Calu3 (cell line): ENCODE measurements at regions of chr6 and their contacts with region 1.

Region 1: DNA sequence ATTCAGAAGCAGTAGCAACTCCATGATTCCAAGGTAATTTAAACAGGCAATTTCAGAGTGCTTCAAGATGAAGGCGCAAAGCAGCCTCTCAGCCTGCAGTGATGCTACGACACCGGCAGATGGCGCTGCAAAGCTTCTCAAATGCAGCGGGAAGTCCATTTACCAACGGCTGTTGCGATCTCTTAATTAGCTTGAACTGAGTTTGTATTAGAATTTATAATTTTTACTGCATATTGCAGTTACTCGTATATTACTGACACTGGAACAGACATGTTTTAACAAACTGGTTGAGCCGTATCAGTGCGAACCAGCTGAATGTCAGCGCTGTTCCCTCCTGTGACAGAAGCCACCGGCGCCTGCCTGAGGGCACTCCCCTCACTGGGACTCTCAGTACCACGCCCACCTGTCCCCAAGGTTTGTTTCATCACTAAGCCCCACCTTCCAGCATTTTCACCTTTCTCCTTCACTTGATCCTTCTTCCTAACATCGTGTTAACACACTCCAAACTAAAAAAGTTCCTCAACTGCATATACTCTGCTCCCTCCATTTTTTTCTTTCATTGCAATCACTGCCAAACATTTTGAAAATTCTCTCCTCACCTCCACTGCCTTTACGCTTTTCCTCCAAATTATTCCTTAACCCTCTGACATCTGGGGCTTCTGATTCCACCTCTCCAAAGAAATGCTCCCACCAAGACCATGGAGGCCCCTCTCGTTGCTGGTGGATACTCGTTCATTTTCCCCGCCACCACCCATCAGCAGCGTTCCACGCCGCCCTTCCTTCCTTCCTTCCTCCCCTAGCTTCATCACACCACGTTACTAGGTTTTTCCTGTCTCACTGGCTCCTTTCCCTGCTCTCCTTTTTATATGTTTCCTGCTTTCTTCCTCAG is 14.5 kb downstream of the GNL1 start:
- DNase-seq: peak; percentile 80
- H3K4me3 Mint-ChIP-seq: peak overlapping the region; percentile 27
- H3K27ac Mint-ChIP-seq: peak overlapping the region; percentile 6
- H3K4me1 Mint-ChIP-seq: peaks cover 18% of the 10 kb centered on the region
- H3K27me3 Mint-ChIP-seq: no peaks in the 10 kb centered on the region
- CTCF ChIP-seq: peak; percentile 96

Region 2: DNA sequence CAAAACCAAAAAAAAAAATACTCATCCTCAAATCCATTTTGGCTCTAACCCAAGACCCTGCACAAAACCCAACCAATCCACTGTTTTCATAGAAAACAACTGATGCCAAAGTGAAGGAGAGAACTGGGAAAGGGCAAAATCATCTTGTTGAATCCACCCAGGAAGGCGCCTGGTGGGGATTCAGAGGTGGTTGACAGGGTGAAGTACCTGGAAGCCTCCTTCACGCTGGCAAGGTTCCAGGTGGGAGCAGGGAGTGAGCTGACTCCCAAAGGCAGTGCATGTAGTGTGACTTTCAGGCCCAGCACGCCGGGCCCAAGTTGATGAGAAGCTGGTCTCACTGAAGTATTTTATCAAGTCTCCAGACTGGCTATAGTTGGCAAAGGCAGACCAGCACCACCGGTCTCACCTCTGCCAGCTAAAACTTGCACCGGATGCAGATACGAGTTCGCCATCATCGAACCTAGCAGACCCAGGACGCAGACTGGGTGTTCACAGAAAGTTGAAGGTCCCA is 58.7 kb after region 1 on chr6:
- CTCF ChIA-PET with region 1: interaction called, 13 read pairs
- intact Hi-C with region 1: loop called (anchors 5 kb)
- DNase-seq: no peak
- H3K4me3 Mint-ChIP-seq: no peak overlapping the region
- H3K27ac Mint-ChIP-seq: peak overlapping the region; percentile 71
- H3K4me1 Mint-ChIP-seq: no peaks in the 10 kb centered on the region
- H3K27me3 Mint-ChIP-seq: no peaks in the 10 kb centered on the region
- CTCF ChIP-seq: no peak